Right cardiac atrium (tissue), 5 donors: ENCODE measurements at regions of chr19 and their contacts with region 1.

Region 1: GRCh38 chr19:15629003-15629880 is 11.5 kb upstream of the CYP4F3 start:
- DNase-seq: peak; percentile 76 to 92 (median 92)
- ATAC-seq: peak; percentile 91 to 92
- H3K4me3 ChIP-seq: no peak overlapping the region
- H3K27ac ChIP-seq: no peak overlapping the region
- H3K4me1 ChIP-seq: no peaks in the 10 kb centered on the region
- H3K27me3 ChIP-seq: no peaks in the 10 kb centered on the region

Region 2: GRCh38 chr19:15810335-15810734 is 181.1 kb after region 1 on chr19:
- intact Hi-C with region 1: loop called in 2 of 4 experiments (anchors 10 kb)
- DNase-seq: peak in 1 of 3 donors; percentile 68
- ATAC-seq: no peak
- H3K4me3 ChIP-seq: no peak overlapping the region
- H3K27ac ChIP-seq: no peak overlapping the region
- H3K4me1 ChIP-seq: no peaks in the 10 kb centered on the region
- H3K27me3 ChIP-seq: no peaks in the 10 kb centered on the region

Region 3: GRCh38 chr19:15869109-15869555 is 239.9 kb after region 1 on chr19:
- intact Hi-C with region 1: loop called in 1 of 4 experiments (anchors 10 kb)
- DNase-seq: peak in 1 of 3 donors; percentile 40
- ATAC-seq: peak; percentile 55 to 80
- H3K4me3 ChIP-seq: no peak overlapping the region
- H3K27ac ChIP-seq: no peak overlapping the region
- H3K4me1 ChIP-seq: no peaks in the 10 kb centered on the region
- H3K27me3 ChIP-seq: no peaks in the 10 kb centered on the region

Region 4: DNA sequence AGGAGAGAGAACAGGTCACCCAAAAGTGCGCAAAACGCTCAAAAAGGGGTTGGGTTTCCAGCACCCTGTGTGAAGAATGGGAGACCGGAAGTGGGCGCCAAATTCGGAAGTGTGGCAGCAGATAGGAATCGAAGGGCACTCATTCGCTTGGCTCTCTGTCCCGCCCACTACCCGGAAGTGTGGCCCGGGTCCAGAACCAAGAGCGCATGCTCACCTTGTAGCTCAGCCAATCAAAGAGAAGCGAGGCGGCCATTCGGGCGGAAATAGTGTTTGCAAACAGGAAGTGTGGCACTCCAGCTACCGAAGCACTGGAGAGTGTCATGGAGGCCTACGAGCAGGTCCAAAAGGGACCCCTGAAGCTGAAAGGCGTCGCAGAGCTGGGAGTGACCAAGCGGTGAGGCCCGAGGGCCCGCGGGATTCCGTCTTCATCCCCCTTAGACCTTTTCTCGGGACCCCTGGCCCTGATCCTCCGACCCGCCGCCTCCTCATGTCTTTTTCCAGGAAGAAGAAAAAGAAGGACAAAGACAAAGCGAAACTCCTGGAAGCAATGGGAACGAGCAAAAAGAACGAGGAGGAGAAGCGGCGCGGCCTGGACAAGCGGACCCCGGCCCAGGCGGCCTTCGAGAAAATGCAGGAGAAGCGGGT is 556.0 kb after region 1 on chr19 and contains the start of gene FAM32A:
- intact Hi-C with region 1: loop called in 2 of 4 experiments (anchors 2 to 5 kb)
- DNase-seq: peak; percentile 99
- ATAC-seq: peak; percentile 98
- H3K4me3 ChIP-seq: peak within 1 kb of the TSS; percentile 99
- H3K27ac ChIP-seq: peak within 1 kb of the TSS; percentile 84
- H3K4me1 ChIP-seq: no peaks in the 10 kb centered on the region
- H3K27me3 ChIP-seq: no peaks in the 10 kb centered on the region
- total RNA-seq, gene FAM32A: 37.5 to 42.5 (median 40.1) TPM